Cardiac septum (tissue), 1 donor: ENCODE measurements at regions of chr20 and their contacts with region 1.

Region 1: DNA sequence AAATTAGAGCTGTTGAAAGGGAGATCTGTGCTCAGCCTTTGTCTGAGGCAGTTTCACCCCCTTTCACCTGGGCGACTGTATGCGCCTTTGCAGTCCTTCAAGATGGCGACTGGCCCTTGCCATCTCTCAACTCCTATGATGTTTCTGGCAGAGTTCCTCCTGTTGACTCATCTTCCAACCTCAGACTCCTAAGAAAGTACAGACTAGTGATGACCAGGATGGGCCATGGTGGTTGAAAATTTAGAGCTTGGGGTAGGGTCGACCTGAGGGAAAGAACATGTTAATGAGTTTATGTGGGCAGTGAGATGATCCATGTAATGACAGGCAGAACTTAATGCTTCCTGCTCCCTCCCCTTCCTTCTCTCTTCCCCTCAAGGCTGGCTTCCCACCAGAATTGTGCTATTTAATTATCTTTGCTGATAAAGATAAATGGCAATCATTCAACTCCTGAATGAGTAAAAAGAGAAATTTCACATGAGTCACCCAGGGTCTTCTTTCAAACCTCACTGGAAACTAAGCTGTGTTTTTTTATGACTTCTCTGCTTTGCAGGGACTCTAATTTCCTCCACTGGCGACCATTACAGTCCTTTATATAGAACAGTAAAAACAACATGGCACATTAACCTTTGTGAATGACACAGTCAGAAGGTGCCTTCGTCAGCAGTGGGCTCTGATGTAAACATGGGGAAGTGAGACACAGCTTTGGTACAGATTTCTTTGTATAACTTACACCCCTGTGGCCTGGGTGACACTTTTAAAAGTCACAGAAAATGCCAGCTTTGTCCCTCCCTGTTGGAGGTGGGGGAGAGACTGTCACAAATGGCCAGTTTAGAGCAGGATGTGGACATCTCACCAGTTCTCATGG is 103.5 kb downstream of the SCP2D1 start:
- DNase-seq: no peak

Region 2: DNA sequence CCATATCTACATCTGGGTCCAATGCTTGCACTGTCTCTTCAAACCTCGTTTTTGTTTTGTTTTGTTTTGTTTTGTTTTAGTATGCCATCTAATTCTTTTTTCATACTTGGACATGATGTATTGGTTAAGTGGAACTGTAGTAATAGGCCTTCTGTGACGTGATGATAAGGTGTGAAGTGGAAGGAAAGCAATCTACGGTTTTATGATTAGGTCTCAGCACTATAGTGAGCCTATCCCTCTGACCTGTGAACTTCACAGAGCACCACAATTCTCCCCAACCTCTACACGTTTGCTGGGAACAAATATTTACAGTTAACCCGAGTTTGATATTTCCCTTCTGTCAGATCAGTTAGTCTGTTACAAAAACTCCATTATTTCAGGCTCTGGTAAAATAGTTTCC is 276.2 kb after region 1 on chr20:
- intact Hi-C with region 1: loop called (anchors 10 kb)
- DNase-seq: no peak

Region 3: GRCh38 chr20:19460386-19460785 is 543.3 kb after region 1 on chr20:
- intact Hi-C with region 1: no loop called
- DNase-seq: no peak